Activated CD4-positive, alpha-beta memory T cell treated with anti-CD3 and anti-CD28 coated beads for 36 hours (primary cell): ENCODE measurements at regions of chr2 and their contacts with region 1.

Region 1: GRCh38 chr2:112156152-112156986 is 18.2 kb downstream of the FBLN7 start:
- DNase-seq: peak; percentile 76
- H3K4me3 Mint-ChIP-seq: peak overlapping the region; percentile 59
- H3K27ac Mint-ChIP-seq: peak overlapping the region; percentile 82
- H3K4me1 Mint-ChIP-seq: peaks cover 51% of the 10 kb centered on the region
- H3K27me3 Mint-ChIP-seq: no peaks in the 10 kb centered on the region

Region 2: DNA sequence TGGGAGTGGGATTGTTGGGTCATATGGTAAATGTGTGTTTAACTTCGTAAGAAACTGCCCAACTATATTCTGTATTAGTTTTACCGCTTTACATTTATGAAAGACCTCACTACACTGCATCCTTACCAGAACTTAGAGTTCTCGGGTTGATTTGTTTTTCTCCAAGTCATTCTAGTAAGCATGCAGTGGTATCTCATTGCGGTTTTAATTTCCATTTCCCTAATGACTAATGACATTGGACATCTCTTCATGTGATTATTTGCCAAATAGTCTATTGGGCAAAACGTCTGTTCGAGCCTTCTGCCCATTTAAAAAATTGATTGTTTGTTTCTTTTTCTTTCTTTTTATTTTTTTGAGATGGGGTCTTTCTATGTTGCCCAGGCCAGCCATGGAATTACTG is 11.4 kb before region 1 on chr2:
- CTCF ChIA-PET with region 1: no interaction called
- POLR2A ChIA-PET with region 1: no interaction called
- intact Hi-C with region 1: no loop called
- DNase-seq: no peak
- H3K4me3 Mint-ChIP-seq: no peak overlapping the region
- H3K27ac Mint-ChIP-seq: no peak overlapping the region
- H3K4me1 Mint-ChIP-seq: no peaks in the 10 kb centered on the region
- H3K27me3 Mint-ChIP-seq: peaks cover 8% of the 10 kb centered on the region

Region 3: DNA sequence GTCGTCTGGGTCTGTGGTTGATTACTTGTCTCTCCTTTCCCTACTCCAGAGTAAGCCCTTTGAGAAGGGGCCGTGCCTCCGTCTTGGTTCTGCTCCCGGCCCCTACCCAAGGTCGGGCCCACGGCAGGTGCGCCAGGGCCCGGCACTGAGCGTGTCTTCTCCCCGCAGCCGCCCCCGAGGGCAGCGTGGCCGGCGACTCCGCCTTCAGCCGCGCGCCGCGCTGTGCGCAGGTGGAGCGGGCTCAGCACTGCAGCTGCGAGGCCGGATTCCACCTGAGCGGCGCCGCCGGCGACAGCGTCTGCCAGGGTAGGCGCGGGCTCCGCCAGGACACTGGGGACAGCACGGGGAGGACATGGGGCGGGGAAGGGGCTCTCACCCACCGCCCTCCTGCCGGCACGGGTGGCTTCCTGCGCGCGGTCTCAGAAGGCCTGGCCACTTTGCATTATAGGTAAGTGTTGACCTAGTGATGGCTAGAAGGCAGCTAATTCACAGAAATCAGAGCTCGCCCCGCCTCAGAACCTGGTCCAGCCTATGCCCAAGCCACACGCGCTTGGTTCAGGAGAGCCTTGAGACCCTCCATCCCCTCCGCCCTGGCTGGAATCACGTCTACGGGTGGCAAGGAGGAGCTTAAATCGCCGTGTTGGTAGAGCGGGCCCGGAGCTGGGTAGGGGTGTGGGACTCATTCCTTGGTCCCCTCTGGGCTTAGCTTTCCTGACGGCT is 25.4 kb after region 1 on chr2:
- CTCF ChIA-PET with region 1: interaction called, 5 read pairs
- POLR2A ChIA-PET with region 1: interaction called, 12 read pairs
- intact Hi-C with region 1: no loop called
- DNase-seq: peak; percentile 78
- H3K4me3 Mint-ChIP-seq: peak overlapping the region; percentile 88
- H3K27ac Mint-ChIP-seq: peak overlapping the region; percentile 98
- H3K4me1 Mint-ChIP-seq: peaks cover 66% of the 10 kb centered on the region
- H3K27me3 Mint-ChIP-seq: no peaks in the 10 kb centered on the region

Region 4: DNA sequence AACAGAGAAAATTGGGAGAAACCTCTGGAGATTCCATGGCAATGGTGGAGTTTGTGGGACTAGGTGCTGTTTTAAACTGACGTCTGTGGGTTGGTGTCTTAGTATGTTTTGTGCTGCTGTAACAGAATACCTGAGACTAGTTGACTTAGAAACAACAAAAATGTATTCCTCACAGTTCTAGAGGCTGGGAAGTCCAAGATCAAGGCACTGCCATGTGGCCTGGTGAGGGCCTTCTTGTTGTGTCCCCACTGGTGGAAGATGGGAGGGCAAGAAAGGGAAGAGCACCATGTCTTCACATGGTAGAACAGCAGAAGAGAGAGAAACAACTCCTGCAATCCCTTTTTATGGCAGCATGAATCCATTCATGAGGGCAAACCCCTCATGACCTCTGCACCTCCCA is 112.2 kb after region 1 on chr2:
- CTCF ChIA-PET with region 1: no interaction called
- POLR2A ChIA-PET with region 1: no interaction called
- intact Hi-C with region 1: no loop called
- DNase-seq: no peak
- H3K4me3 Mint-ChIP-seq: no peak overlapping the region
- H3K27ac Mint-ChIP-seq: no peak overlapping the region
- H3K4me1 Mint-ChIP-seq: no peaks in the 10 kb centered on the region
- H3K27me3 Mint-ChIP-seq: no peaks in the 10 kb centered on the region